Breast epithelium (tissue), 4 donors: ENCODE measurements at regions of chr22 and their contacts with region 1.

Region 1: DNA sequence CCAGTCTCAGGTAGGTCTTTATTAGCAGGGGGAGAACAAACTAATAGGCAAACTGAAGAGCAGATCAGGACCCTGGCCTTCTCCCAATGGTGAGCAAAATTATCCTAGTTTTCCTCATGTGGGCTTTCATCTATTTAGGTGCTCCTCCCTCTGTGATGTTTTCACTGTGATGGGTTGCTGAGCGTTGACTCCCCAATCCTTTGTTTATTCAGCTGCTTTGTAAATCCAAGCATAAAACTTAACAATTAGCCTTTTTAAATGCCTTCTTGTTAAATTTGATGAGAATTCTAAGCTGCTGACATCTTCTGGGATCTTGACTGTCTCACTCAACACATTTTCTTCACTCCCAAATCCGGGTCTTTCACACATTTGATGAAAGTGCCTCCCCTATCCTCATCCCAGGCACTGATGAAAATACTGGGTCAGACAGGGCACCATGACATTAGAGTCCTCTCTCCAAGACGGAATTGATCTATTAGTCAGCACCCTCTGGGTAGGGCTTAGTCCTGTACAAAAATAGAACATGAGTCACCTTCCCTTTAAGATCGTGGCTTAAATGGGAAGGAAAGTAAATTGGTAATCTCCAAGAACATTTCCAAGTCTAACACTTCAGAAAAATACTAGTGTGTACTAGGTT is 199.3 kb upstream of the ISX start:
- DNase-seq: no peak
- H3K4me3 ChIP-seq: no peak overlapping the region
- H3K27ac ChIP-seq: no peak overlapping the region
- H3K4me1 ChIP-seq: no peaks in the 10 kb centered on the region
- H3K27me3 ChIP-seq: no peaks in the 10 kb centered on the region
- CTCF ChIP-seq: no peak
- POLR2A ChIP-seq: no peak

Region 2: GRCh38 chr22:34878996-34879395 is 12.4 kb after region 1 on chr22:
- intact Hi-C with region 1: loop called (anchors 1 kb)
- DNase-seq: no peak
- H3K4me3 ChIP-seq: no peak overlapping the region
- H3K27ac ChIP-seq: no peak overlapping the region
- H3K4me1 ChIP-seq: no peaks in the 10 kb centered on the region
- H3K27me3 ChIP-seq: peaks cover 0 to 4% of the 10 kb centered on the region in 2 donors
- CTCF ChIP-seq: no peak
- POLR2A ChIP-seq: no peak

Region 3: GRCh38 chr22:35043252-35043931 is 176.8 kb after region 1 on chr22:
- intact Hi-C with region 1: no loop called
- DNase-seq: no peak
- H3K4me3 ChIP-seq: no peak overlapping the region
- H3K27ac ChIP-seq: no peak overlapping the region
- H3K4me1 ChIP-seq: no peaks in the 10 kb centered on the region
- H3K27me3 ChIP-seq: peaks cover 0 to 36% of the 10 kb centered on the region in 2 donors
- CTCF ChIP-seq: no peak
- POLR2A ChIP-seq: no peak